Naive thymus-derived CD8-positive, alpha-beta T cell (primary cell): ENCODE measurements at regions of chr21 and their contacts with region 1.

Region 1: DNA sequence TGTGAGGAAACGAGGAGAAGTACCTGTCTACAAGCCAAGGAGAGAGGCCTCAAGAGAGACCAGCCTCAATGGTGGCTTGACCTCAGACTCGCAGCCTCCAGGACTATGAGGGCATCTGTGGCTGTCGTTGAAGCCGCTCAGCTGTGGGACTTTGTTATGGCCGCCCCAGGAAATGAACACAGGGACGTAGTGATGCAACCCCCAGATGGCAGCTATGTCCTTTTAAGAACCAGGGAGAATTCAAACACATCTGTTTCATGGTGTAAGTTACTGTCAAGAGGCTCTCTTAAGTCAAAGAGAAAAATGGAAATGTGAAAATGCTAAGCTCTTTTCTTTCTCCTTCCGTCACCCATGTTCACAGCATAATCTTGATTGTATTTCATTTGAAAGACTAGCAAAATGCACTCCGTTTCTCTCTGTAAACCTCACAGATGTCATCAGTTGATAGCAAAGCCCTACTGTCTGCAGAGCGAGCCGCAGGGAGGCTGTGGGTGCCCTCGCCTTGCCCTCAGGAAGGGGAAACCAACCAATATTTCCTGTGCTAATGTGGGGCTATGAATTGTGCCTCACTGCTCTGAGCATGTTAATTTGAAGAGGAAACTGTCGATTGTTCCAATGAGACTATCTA is 21.3 kb downstream of the UBASH3A start:
- DNase-seq: peak; percentile 55 to 92 (median 84)
- ATAC-seq: peak; percentile 90 to 93
- H3K4me3 Mint-ChIP-seq: peak overlapping the region; percentile 60 to 91 (median 80)
- H3K27ac Mint-ChIP-seq: peak overlapping the region; percentile 83 to 98 (median 90)
- H3K4me1 Mint-ChIP-seq: peaks cover 50 to 88% (median 80%) of the 10 kb centered on the region in 4 donors
- H3K27me3 Mint-ChIP-seq: peaks cover 0 to 2% (median 0%) of the 10 kb centered on the region in 5 donors

Region 2: DNA sequence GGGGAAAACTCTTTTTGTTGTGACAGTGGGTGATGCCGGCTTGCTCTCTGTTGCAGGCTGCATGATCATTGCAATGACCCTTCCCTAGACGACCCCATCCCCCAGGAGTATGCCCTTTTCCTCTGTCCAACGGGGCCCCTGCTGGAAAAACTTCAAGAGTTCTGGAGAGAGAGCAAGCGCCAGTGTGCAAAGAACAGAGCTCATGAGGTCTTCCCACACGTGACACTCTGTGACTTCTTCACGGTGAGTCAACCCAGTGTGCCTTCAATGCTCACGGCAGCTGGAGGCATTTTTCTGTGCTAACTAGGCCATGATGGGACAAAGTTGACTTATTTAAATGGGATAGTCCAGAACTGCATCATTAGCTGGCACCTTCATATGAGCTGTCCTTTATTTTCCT is 15.7 kb before region 1 on chr21:
- POLR2A ChIA-PET with region 1: interaction called, 273 read pairs
- DNase-seq: no peak
- ATAC-seq: no peak
- H3K4me3 Mint-ChIP-seq: peak overlapping the region in 9 of 10 donors; percentile 12 to 78 (median 51)
- H3K27ac Mint-ChIP-seq: peak overlapping the region in 7 of 10 donors; percentile 80 to 97 (median 88)
- H3K4me1 Mint-ChIP-seq: peaks cover 36 to 54% (median 46%) of the 10 kb centered on the region in 4 donors
- H3K27me3 Mint-ChIP-seq: no peaks in the 10 kb centered on the region

Region 3: GRCh38 chr21:42443876-42444745 is 19.1 kb after region 1 on chr21:
- POLR2A ChIA-PET with region 1: interaction called, 12 read pairs
- DNase-seq: peak in 1 of 10 donors; percentile 50
- ATAC-seq: no peak
- H3K4me3 Mint-ChIP-seq: no peak overlapping the region
- H3K27ac Mint-ChIP-seq: peak overlapping the region in 7 of 10 donors; percentile 6 to 91 (median 73)
- H3K4me1 Mint-ChIP-seq: peaks cover 21 to 54% (median 34%) of the 10 kb centered on the region in 4 donors
- H3K27me3 Mint-ChIP-seq: peaks cover 0 to 2% (median 0%) of the 10 kb centered on the region in 5 donors